A673 (cell line): ENCODE measurements at regions of chr5 and their contacts with region 1.

Region 1: DNA sequence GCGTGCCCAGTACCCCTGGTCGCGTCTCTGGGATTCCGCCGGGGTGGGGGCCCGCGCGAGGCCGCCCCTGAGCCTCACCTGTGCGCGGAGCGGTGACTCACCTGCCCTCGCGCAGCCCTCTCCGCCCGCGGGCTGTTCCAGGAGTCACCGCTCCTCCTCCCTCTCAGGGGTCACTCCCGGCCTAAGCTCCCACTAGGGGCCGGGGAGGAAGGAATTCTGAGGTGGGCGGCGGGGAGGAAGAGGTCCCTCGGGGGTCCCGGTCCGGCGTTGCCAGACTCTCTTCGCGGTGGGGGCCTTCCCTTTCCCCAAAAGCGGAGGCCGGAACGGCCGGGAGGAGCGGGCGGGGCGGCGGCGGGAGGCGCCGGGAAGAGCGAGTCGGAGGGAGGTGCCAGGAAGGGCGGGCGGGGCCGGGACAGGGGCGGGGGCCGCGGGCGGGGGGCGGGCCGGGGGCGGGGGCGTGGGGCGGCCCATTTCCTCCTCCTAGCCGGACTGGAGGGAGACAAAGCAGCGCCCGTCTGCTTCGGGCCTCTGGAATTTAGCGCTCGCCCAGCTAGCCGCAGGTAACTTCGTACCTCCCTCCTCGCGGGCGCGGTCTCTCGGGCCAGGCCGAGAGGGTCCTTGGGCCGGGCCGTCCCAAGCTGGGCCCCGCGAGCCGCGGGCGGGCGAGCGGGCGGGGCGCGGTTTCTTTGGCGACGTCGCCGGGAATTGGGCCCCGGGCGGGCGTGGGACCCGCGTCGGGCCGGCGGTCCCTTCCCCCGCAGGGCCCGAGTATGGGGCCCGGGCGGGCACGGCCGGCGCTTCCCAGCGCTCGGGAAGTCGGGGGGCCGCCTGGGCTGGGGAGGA is at the start of gene CTNNA1:
- DNase-seq: peak; percentile 69
- H3K4me3 ChIP-seq: peak within 1 kb of the TSS; percentile 100
- H3K27ac ChIP-seq: peak within 1 kb of the TSS; percentile 94
- H3K4me1 ChIP-seq: peaks cover 15% of the 10 kb centered on the region
- H3K27me3 ChIP-seq: no peaks in the 10 kb centered on the region
- CTCF ChIP-seq: no peak
- total RNA-seq, gene CTNNA1: 249 and 250 TPM in 2 replicates

Region 2: GRCh38 chr5:138772986-138773594 is 19.9 kb after region 1 on chr5:
- CTCF ChIA-PET with region 1: no interaction called
- POLR2A ChIA-PET with region 1: interaction called, 11 read pairs
- intact Hi-C with region 1: no loop called
- DNase-seq: no peak
- H3K4me3 ChIP-seq: no peak overlapping the region
- H3K27ac ChIP-seq: no peak overlapping the region
- H3K4me1 ChIP-seq: peaks cover 4% of the 10 kb centered on the region
- H3K27me3 ChIP-seq: no peaks in the 10 kb centered on the region
- CTCF ChIP-seq: no peak

Region 3: DNA sequence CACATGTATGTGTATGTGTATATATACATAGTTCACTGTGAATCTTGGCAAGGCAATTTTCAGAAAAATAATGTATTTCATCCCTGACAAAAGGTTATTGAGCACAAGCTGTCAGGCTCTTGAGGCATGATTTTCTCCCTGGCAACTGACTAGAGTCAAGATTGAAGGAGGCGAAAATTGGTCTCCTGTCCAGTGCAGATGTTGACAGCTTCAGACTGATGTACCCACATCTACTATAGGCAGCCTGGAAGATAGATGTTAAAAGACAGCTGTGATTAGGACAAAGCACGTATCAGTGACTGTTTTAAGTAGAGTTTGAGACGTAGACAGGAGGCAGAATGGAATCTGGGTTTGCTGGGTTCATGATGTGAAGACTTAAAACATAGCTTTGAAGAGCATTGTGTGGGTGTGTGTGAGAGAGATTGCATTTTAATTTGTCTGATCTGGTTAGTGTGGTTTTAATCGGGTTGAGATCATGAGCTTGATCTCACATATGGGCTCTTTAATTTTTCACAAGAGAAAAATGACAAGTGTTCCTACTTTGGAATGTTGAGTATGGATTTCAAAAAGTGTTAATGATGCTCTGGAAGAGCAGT is 39.1 kb after region 1 on chr5:
- CTCF ChIA-PET with region 1: no interaction called
- POLR2A ChIA-PET with region 1: no interaction called
- intact Hi-C with region 1: no loop called
- DNase-seq: peak; percentile 18
- H3K4me3 ChIP-seq: no peak overlapping the region
- H3K27ac ChIP-seq: no peak overlapping the region
- H3K4me1 ChIP-seq: peaks cover 24% of the 10 kb centered on the region
- H3K27me3 ChIP-seq: no peaks in the 10 kb centered on the region
- CTCF ChIP-seq: no peak